ENCODE measurements at regions of chr20 and their contacts with region 1.

Region 1: DNA sequence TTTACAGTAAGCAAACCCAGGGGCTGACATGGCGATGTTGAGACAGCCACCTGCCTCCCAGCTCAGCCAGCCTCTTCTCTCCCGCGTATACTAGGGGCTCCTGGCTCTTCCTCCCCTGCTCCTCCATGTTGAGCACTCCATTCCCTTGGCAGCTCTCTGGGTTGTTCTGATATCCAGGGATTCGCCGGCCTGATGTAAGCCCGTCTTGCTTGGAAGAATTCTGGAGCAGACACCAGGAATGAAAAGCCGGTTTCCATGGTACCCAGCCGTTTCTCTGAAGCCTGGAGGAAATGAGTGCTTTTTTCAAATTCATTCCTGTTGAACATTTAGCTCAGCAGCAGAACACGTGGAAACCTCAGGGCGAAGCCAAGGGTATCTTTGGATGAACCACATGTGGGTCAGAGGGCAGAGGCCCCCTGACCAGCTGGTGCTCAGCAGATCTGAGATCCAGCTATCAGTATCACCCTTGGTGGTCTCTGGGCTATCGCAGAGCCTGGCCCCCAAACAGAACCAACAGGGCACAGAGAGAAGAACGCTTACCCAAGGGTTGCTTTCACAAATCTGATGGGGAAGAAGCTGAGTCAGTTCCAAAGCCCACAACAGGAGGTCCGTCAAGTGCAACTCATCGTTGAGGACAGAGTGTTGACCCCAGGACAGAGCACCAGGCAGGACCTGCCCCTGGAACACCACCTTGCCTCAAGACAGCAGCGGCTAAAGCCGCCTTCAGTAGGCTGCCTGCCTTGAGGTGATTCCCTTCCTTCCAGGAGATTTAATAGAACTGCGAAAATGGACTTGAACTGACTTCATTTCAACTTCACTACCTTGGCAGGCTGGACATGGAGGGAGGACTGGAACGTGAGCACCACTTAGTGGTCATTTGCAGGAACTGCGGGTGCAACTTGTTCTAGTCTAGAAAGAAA is 96.1 kb upstream of the RIN2 start:
- DNase-seq: no peak

Region 2: GRCh38 chr20:18904624-18905023 is 757.4 kb before region 1 on chr20:
- intact Hi-C with region 1: loop called (anchors 10 kb)
- DNase-seq: no peak

Region 3: GRCh38 chr20:19205977-19206396 is 456.0 kb before region 1 on chr20:
- intact Hi-C with region 1: loop called (anchors 5 kb)
- DNase-seq: peak; percentile 83

Region 4: GRCh38 chr20:19588732-19589131 is 73.2 kb before region 1 on chr20:
- intact Hi-C with region 1: loop called (anchors 2 kb)
- DNase-seq: no peak

Region 5: DNA sequence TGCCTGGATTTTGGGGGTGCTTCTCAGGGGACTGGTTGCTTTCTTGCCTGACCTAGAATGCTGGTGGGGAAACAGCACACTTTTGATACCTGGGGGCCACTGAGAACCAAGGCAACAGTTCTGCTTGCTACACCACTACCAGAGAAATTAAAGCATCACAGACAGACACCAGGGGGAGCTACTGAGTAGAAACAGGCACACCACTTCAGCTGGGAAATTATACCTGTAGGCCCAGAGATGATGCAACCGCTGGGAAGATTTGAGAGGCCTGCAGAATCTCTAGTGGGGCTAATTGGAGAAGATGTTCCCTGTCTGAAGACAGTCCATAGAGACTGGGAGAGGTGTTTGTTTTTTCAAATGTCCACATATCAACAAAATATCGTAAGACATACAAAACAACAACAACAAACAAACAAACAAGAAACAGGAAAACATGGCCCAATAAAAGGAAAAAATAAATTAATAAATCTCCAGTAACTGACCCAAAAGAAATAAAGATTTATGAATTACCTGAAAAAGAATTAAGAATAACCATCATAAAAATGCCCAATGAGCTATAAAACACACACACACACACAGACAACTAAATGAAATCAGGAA is 33.3 kb before region 1 on chr20:
- intact Hi-C with region 1: loop called (anchors 2 kb)
- DNase-seq: no peak

Region 6: DNA sequence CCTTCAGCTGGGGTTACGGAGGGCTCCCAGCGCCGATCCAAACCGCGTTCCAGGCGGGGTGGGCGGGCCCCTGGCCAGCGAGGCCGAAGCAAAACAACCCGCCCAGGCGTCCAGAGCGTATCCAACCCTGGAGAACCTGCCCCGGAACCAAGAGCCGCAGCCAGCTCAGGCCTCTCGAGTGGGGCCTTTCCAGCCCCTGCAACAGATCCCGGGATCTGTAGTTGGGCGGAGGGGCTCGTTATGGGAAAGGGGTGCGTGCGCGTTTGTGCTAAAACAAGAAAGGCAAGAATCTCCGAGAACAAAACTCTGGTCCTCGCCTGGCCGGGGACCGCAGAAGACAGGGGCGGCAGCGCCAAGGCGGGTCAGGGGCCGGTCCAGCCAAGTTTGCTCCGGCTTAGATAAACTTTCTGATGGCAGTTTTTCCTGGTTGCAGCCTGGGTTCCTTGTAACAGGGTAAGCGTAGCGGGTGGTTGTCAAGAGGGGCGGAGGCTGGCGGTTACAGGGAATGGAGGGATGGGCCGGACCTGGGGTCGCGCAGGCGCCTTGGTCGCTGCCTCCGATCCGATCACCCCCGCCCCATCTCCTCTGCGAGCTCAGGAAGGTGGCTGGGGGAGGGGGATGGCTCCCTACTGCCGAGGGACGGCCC is 95.6 kb after region 1 on chr20:
- intact Hi-C with region 1: no loop called
- DNase-seq: peak; percentile 94